Cardiac septum (tissue), 1 donor: ENCODE measurements at regions of chr9 and their contacts with region 1.

Region 1: GRCh38 chr9:2158111-2158610 is 143.0 kb downstream of the SMARCA2 start:
- DNase-seq: no peak

Region 2: GRCh38 chr9:2241836-2242741 is 83.9 kb after region 1 on chr9:
- intact Hi-C with region 1: loop called (anchors 10 kb)
- DNase-seq: peak; percentile 88

Region 3: DNA sequence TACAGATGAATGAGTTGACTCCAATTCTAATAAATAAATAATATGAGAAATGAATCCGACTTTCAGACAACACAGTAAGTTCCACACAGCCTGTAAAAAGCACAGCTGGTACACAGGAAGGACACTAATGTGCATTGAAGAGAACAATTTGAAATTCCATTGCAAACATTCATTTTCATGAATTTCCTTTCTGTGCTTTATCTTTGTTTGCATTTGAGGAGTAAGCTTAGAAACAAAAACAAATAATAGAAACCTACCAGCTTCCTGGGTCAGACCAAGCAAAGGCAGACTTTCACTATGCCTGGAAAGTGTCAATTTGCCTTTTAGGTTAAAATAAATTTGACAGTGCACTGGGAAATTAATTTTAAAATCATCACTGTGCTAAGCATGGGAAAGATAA is 319.6 kb after region 1 on chr9:
- intact Hi-C with region 1: no loop called
- DNase-seq: no peak

Region 4: DNA sequence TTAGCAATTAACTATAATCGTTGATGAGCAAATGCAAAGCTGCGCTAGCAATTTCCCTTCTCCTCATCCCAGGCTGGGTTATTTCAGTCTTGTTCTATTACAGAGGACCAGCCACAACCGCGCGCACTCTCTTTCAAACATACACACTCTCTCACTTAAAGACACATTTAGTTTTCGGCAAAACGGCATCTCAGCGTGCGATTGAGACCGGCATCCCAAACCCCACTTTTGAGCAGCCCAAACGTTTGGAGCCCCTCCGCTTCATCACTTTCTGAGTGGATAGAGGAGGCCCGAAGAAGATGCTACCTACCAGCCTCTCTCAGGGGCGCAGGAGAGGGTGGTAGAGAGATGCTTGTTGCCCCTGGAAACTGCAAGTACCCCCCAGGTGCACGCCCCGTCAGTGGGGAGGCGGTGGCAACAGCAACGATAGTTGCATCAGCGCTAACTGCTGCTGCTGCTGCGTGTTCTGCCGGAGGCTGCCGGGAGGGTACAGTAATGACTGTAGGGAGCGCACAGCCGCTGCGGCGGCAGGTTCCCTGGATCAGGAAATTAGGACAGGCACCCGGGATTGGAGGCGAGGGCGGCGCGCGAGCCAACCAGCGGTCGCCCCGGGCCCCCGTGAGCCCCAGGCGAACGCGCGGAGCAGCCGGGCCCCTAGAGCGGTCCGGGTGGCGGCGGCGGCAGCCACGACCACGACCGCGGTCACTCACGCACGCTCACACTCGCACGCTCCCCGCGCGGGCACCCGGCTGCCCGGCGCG is 462.9 kb after region 1 on chr9:
- intact Hi-C with region 1: loop called (anchors 10 kb)
- DNase-seq: peak; percentile 85

Region 5: DNA sequence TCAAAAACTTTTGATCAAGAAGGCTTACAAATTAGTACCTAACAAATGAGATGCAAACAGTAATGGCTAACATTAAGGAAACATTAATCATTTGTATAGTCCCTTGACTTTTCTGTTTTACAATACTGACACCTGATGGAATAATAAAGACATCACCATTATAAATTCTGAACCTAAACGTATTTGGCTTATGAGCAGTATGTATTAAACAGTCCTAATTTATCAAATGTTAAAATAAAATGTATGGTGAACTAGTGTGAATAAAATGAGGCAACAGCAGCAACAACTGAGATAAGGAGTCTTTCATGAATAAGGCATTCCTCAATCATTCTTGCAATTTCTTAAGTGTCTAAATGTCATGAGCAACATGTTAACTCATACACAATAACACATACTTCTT is 679.8 kb after region 1 on chr9:
- intact Hi-C with region 1: loop called (anchors 5 kb)
- DNase-seq: no peak